ENCODE measurements at regions of chr10 and their contacts with region 1.

Region 1: GRCh38 chr10:35433851-35434426 is 97.6 kb downstream of the CCNY start:
- DNase-seq: no peak
- H3K4me3 Mint-ChIP-seq: no peak overlapping the region
- H3K27ac Mint-ChIP-seq: peak overlapping the region; percentile 31
- H3K4me1 Mint-ChIP-seq: peaks cover 22% of the 10 kb centered on the region
- H3K27me3 Mint-ChIP-seq: no peaks in the 10 kb centered on the region

Region 2: DNA sequence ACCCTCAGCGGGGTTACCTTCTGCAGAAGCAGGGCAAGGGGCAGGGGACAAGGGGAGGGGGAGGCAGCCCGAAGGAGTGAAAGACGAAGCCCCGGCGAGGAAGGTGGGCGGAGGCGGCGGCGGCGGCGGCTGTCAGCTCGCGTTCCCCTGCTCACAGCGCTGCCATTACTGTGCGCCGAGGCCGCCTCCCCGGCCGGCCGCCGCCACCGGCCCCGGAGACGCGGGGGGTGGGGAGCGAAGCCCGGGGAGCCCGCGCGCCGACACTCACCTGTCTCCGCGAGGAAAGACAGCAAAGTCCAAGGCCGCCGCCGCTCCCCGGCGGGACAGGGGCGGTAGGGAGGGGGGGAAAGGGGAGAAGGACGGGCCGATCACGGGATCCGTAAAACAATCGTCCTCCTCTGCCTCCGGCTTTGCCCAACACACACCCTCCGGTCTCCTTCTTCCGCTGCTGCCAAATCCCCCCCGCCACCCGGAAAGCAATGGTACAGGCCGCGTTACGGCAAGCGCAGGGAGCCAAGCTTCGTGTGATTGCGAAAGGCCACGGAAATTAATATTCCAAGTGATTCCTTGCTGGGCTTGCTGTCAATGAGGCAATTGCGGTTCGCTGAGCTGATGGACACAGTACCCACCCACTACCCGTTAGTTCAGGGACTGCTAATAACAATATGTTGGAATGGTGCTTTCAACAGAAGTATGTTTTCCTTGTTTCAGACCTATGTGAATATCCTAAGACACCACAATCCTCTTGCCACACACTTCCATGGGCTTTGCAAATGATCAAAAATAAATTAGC is 343.6 kb before region 1 on chr10 and contains the start of gene CUL2:
- intact Hi-C with region 1: loop called (anchors 1 kb)
- DNase-seq: peak; percentile 90
- H3K4me3 Mint-ChIP-seq: peak within 1 kb of the TSS; percentile 98
- H3K27ac Mint-ChIP-seq: peak within 1 kb of the TSS; percentile 99
- H3K4me1 Mint-ChIP-seq: peaks cover 38% of the 10 kb centered on the region
- H3K27me3 Mint-ChIP-seq: peaks cover 9% of the 10 kb centered on the region
- total RNA-seq, gene CUL2: 49.8 and 50.5 TPM in 2 replicates

Region 3: GRCh38 chr10:35417795-35418194 is 16.1 kb before region 1 on chr10:
- intact Hi-C with region 1: loop called (anchors 2 kb)
- DNase-seq: no peak
- H3K4me3 Mint-ChIP-seq: no peak overlapping the region
- H3K27ac Mint-ChIP-seq: no peak overlapping the region
- H3K4me1 Mint-ChIP-seq: peaks cover 44% of the 10 kb centered on the region
- H3K27me3 Mint-ChIP-seq: no peaks in the 10 kb centered on the region

Measured in activated T-helper 1 cell treated with anti-CD3 and anti-CD28 coated beads, Interleukin-12 subunit alpha, Interleukin-12 subunit beta, Interleukin-2, Interleukin-4 antibody, amounts not matched to agents 30 ng/mL and 10 ng/mL and 1 ng/mL, durations not matched to agents 14 hours and 24 hours and 36 hours (primary cell).